ENCODE measurements at regions of chr9 and their contacts with region 1.

Region 1: GRCh38 chr9:107172160-107172978 is 110.7 kb upstream of the RAD23B start:
- DNase-seq: peak; percentile 63 to 91 (median 76)
- H3K4me3 ChIP-seq: no peak overlapping the region
- H3K27ac ChIP-seq: no peak overlapping the region
- H3K27me3 ChIP-seq: peaks cover 0 to 4% (median 0%) of the 10 kb centered on the region in 45 donors
- CTCF ChIP-seq: peak; percentile 83 to 98 (median 93)

Region 2: GRCh38 chr9:105842023-105842644 is 1330.2 kb before region 1 on chr9:
- intact Hi-C with region 1: loop called in 1 of 2 experiments (anchors 5 kb)
- DNase-seq: no peak
- H3K4me3 ChIP-seq: no peak overlapping the region
- H3K27ac ChIP-seq: no peak overlapping the region
- H3K27me3 ChIP-seq: no peaks in the 10 kb centered on the region
- CTCF ChIP-seq: peak; percentile 65 to 96 (median 84)

Region 3: GRCh38 chr9:105901514-105902109 is 1270.8 kb before region 1 on chr9:
- intact Hi-C with region 1: loop called in 1 of 2 experiments (anchors 10 kb)
- DNase-seq: peak in 6 of 10 donors; percentile 31 to 71 (median 48)
- H3K4me3 ChIP-seq: no peak overlapping the region
- H3K27ac ChIP-seq: peak overlapping the region in 1 of 59 donors; percentile 18
- H3K27me3 ChIP-seq: no peaks in the 10 kb centered on the region
- CTCF ChIP-seq: peak; percentile 25 to 91 (median 76)

Region 4: DNA sequence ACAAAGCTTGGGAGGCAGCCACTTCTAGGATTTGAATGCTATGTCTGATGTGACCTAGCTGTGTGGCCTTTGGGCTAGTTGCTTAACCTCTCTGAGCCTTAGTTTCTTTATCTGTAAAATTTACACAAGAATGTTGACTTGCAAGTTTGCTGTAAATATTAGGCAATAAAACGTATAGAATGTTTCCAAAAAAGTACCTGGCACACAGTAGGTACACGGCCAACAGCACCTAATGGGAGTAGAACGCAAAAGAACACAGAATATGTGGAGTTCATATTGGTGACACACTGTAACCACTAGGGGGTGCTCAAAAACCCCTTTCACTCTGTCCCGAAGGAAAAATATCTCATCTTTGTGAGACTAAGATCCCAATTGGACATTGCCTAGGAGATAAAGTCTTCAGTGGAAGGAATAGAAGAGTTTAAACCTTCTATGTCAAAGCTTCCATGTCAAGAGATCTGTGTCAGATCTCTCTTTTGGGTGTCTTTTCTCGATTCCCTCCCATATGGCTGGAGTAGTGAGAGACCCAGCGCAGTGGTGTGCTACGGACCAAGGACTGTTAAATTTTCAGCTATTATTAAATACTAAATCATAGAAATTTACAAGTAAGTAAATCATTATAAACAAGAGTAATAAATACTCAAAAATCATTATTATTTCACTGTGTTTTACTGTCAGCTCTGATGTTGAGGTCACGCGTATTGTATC is 34.7 kb before region 1 on chr9:
- intact Hi-C with region 1: loop called in 1 of 2 experiments (anchors 2 kb)
- DNase-seq: no peak
- H3K4me3 ChIP-seq: no peak overlapping the region
- H3K27ac ChIP-seq: no peak overlapping the region
- H3K27me3 ChIP-seq: no peaks in the 10 kb centered on the region
- CTCF ChIP-seq: peak; percentile 50 to 76 (median 66)

Region 5: DNA sequence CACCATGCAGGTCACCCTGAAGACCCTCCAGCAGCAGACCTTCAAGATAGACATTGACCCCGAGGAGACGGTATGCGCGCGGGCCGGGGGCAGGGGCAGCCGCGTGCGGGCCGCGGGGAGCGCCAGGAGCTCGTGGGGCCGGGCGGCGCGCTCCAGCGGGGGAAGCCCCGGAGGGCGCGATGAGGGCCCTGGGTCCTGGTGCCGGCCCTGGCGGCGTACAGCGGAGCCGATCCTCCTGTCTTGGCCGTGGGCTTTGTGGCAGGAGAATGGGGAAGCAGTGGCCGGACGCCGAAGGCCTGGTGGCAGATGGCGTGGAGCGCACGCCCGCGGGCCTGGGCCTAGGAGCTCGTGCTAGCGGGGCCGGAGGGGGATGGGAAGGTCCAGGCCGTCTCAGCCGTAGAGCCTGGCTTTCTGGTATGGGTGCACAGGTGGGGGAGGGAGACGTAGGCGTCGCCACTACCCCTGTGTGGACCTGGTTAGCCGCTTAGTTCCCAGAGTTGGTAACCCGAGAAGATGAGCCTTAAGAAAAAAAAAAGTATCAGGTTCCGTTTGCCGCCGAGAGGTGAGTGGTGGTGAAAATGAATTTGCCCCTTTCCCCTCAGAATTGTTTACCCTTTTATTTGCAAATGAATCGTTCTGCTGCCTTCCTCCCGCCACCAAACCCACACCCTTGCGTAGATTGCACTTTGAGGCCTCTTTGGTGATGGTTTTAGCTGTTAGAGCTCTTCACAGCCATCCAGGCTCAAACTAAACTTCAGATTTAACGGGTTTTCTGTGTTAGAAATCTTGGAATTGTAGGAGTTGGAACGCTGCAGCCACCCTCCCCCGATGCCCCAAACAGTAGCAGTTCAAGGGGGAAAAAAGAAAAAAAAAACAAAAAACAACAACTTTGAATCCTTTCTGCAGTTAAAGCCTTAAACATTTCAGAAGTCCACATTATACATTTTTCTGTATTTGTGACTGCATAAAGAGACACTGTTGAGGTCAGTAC is 111.6 kb after region 1 on chr9:
- intact Hi-C with region 1: no loop called
- DNase-seq: peak; percentile 24 to 68 (median 55)
- H3K4me3 ChIP-seq: peak overlapping the region; percentile 69 to 99 (median 93)
- H3K27ac ChIP-seq: peak overlapping the region; percentile 89 to 100 (median 98)
- H3K27me3 ChIP-seq: no peaks in the 10 kb centered on the region
- CTCF ChIP-seq: peak in 3 of 56 donors; percentile 1 to 22 (median 13)